Activated CD4-positive, alpha-beta T cell treated with anti-CD3 and anti-CD28 coated beads, Interleukin-2, amount 10 ng/mL, durations not matched to agents 24 days and 14 days (primary cell): ENCODE measurements at regions of chr12 and their contacts with region 1.

Region 1: DNA sequence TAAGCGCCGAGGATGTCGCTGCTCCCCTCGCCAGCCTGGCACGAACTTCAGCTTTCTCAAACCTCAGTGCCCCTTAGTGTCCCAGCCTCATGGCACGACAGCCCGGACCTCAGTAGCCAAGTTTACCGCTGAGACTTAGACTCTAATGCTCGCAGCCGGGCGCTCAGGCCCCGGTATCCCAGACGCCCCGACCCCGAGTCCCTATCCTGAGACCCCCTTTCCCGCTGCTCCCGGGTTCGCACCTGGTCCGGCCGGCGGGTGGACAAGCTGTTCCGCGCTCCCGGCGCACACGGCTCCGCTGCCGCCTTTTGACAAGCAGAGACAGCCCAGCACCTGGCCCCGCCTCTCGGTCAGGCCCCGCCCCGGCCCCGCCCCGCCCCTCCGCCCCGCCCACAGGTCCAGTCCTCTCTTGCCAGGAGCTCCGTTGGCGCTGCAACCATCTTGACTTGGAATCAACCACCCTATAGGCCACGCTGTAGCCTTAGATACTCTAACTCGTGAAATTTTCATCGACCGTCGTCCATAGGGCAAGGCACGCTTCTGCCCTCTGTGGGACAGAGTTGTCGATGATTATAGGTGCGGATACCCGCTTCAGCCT is at the start of gene VDR:
- DNase-seq: peak; percentile 90
- H3K4me3 Mint-ChIP-seq: peak within 1 kb of the TSS; percentile 95
- H3K27ac Mint-ChIP-seq: peak within 1 kb of the TSS; percentile 92
- H3K4me1 Mint-ChIP-seq: peaks cover 38% of the 10 kb centered on the region
- H3K27me3 Mint-ChIP-seq: peaks cover 32% of the 10 kb centered on the region
- total RNA-seq, gene VDR: 267 and 277 TPM in 2 replicates

Region 2: GRCh38 chr12:47377414-47378221 is 527.2 kb before region 1 on chr12:
- intact Hi-C with region 1: no loop called
- DNase-seq: peak; percentile 53
- H3K4me3 Mint-ChIP-seq: no peak overlapping the region
- H3K27ac Mint-ChIP-seq: peak overlapping the region; percentile 45
- H3K4me1 Mint-ChIP-seq: peaks cover 35% of the 10 kb centered on the region
- H3K27me3 Mint-ChIP-seq: no peaks in the 10 kb centered on the region

Region 3: DNA sequence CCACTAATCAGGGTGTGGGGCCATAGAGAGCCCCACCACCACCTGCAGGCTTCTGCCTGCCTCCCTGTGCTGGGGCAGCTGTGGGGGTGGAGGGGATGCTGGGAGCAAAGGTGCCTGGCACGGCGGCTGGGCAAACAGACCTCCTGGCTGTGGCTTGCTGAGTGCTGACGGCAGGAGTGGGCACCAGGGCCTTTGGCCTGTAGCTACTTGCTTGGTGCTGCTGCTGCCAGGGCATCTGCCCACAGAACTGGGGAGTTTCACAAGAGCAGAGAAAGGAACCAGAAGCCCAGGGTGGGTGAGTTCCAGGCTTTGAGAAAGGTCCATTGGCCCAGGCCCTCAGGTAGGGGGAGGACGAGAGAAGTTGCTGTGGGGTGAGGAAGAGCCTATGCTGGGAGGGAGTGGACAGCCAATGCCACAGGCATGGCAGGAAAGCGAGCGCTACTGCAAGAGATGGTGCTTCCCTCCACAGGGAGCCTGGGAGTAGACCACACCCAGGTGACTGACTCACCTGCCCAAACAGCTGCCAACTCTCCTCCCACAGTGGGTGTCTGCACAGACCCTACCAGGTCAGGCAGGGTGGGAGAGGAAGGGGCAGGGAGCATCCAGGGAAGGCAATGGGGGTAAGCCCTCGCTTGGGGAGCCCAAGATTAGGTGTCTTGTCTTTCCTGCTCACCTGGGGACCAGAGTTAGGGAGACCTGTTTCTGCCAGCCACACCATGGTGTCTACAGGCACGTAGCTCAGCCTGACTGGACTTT is 46.1 kb before region 1 on chr12:
- intact Hi-C with region 1: loop called (anchors 1 kb)
- DNase-seq: no peak
- H3K4me3 Mint-ChIP-seq: no peak overlapping the region
- H3K27ac Mint-ChIP-seq: peak overlapping the region; percentile 92
- H3K4me1 Mint-ChIP-seq: peaks cover 49% of the 10 kb centered on the region
- H3K27me3 Mint-ChIP-seq: no peaks in the 10 kb centered on the region

Region 4: GRCh38 chr12:47882781-47883546 is 21.8 kb before region 1 on chr12:
- intact Hi-C with region 1: loop called (anchors 1 kb)
- DNase-seq: peak; percentile 84
- H3K4me3 Mint-ChIP-seq: peak overlapping the region; percentile 95
- H3K27ac Mint-ChIP-seq: peak overlapping the region; percentile 99
- H3K4me1 Mint-ChIP-seq: peaks cover 81% of the 10 kb centered on the region
- H3K27me3 Mint-ChIP-seq: no peaks in the 10 kb centered on the region

Region 5: GRCh38 chr12:47894068-47894467 is 10.7 kb before region 1 on chr12:
- intact Hi-C with region 1: loop called (anchors 1 kb)
- DNase-seq: no peak
- H3K4me3 Mint-ChIP-seq: peak overlapping the region; percentile 79
- H3K27ac Mint-ChIP-seq: peak overlapping the region; percentile 86
- H3K4me1 Mint-ChIP-seq: peaks cover 93% of the 10 kb centered on the region
- H3K27me3 Mint-ChIP-seq: no peaks in the 10 kb centered on the region

Region 6: DNA sequence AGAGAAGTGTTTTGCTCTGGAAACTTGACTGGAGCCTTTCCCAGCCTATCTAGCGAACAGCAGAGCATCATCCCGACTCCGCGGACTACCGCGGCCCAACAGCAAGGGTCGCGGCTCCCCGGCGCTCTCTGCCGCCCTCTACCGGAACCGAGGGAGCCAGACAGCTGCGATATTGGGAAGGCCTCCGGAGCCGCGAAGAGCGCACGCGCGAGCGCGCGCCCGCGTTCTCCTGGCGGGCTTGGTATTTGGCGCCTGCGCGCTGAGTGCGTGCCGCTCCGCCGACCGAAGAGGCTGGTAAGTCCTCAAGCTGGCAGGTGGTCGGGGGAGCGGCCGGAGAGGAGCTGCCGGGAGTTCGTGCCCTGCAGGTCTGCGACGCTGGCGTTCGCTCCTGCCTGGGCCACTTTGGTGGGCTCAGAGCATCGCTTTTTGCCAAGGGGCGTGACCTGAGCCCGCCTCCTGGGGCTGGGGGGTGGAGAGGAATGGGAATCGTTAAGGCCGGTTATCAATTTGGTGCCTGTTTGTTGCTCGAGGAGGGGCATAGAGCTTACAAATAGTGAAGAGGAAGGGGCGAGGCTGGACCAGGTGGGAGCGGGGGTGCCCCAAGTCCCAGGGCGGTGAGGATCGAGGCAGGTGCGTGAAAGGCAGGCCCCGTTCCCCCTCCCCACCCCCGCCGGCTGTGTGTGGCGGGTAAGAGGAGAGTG is 58.7 kb after region 1 on chr12 and contains the start of gene TMEM106C:
- intact Hi-C with region 1: loop called (anchors 1 kb)
- DNase-seq: peak; percentile 98
- H3K4me3 Mint-ChIP-seq: peak within 1 kb of the TSS; percentile 100
- H3K27ac Mint-ChIP-seq: peak within 1 kb of the TSS; percentile 90
- H3K4me1 Mint-ChIP-seq: peaks cover 33% of the 10 kb centered on the region
- H3K27me3 Mint-ChIP-seq: peaks cover 29% of the 10 kb centered on the region
- total RNA-seq, gene TMEM106C: 155 and 162 TPM in 2 replicates

Region 7: GRCh38 chr12:48183091-48183875 is 278.5 kb after region 1 on chr12 and contains the start of gene CCDC184:
- intact Hi-C with region 1: loop called (anchors 10 kb)
- DNase-seq: peak; percentile 95
- H3K4me3 Mint-ChIP-seq: peak within 1 kb of the TSS; percentile 95
- H3K27ac Mint-ChIP-seq: peak within 1 kb of the TSS; percentile 85
- H3K4me1 Mint-ChIP-seq: peaks cover 29% of the 10 kb centered on the region
- H3K27me3 Mint-ChIP-seq: peaks cover 68% of the 10 kb centered on the region
- total RNA-seq, gene CCDC184: 0.38 and 0.44 TPM in 2 replicates